Left colon (tissue), 2 donors: ENCODE measurements at regions of chrX and their contacts with region 1.

Region 1: DNA sequence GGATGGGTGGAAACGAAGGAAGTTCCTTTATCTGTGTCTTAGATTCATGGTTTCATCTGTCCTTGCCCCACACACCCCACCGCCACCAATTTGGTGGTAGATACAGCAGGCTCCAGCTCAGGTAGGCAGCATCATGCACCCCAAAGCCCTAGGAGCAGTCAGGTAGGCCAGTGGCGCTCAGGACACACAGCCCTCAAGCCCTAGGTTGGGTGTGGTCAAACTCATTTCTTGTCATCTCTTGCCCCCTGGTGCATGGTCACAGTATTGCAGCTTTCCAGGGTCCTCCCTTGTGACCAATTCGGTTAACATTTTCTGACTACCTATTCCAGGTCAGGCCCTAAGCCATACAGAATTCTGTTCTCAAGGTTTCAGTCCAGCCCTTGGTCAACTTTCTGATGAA is 14.5 kb upstream of the PRRG3 start:
- DNase-seq: peak in 1 of 2 donors; percentile 61
- ATAC-seq: peak; percentile 64

Region 2: GRCh38 chrX:151151665-151152267 is 529.0 kb before region 1 on chrX:
- intact Hi-C with region 1: loop called in 1 of 2 experiments (anchors 10 kb)
- DNase-seq: peak in 1 of 2 donors; percentile 9
- ATAC-seq: peak; percentile 59

Region 3: DNA sequence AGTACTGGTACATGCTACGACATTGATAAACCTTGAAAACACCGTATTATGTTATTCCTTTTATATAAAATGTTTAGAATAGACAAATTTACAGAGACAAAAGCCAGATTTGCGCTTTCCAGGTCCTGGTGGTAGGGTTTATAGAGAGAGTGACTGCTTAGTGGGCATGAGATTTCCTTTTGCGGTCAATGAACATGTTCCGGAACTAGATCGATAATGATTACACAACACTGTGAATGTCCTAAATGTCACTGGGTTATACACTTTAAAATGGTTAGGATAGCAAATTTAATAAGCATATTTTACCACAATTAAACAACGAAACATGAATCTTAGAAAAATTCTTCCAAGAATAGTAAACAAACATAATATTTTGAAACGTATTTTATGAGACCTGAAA is 380.3 kb after region 1 on chrX:
- intact Hi-C with region 1: no loop called
- DNase-seq: no peak
- ATAC-seq: no peak